ENCODE measurements at regions of chr1 and their contacts with region 1.

Region 1: DNA sequence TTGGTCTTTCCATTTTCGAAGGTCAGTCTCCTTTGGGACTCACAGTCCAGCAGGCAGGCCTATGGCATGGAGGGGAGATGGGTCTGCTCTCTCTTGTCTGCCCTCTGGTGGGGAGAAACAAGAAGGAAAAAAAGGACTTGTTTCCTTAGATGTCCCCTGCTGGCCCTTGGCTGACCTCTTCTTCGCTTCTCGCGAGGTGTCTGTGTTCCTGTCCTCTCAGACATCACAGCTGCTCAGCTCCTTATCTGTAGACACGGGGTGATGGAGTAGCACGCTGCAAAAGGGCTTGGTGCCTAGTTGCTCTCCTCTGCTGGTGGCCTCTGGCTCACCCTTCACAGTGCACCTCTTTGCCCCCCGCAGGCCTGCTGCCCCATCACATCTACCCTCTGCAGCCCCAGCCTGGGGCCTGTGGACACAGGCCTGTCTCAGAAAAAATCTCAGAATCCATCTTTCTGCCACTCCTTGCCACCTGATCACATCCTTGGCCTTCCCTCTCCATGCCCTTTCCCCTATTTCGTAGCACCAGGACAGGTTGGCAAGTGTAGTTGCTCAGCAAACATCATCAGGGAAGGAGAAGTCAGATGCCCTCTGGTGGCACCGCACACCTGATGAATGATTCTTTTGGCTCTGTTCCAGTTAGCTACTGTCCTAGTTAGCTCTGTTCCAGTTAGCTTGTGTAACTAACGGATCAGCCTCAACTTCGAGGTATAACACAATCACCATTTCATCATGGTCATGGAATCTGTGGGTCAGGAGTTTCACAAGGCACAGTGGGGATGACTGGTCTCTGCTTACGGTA is 18.7 kb upstream of the AK2 start:
- DNase-seq: peak; percentile 87
- ATAC-seq: peak; percentile 98
- H3K4me3 ChIP-seq: no peak overlapping the region
- H3K27ac ChIP-seq: no peak overlapping the region
- H3K4me1 ChIP-seq: peaks cover 3% of the 10 kb centered on the region; the same call in 1 of the 2 replicates
- H3K27me3 ChIP-seq: no peaks in the 10 kb centered on the region
- CTCF ChIP-seq: peak; percentile 80
- POLR2A ChIP-seq: no peak
- RAD21 ChIP-seq: peak; percentile 76

Region 2: DNA sequence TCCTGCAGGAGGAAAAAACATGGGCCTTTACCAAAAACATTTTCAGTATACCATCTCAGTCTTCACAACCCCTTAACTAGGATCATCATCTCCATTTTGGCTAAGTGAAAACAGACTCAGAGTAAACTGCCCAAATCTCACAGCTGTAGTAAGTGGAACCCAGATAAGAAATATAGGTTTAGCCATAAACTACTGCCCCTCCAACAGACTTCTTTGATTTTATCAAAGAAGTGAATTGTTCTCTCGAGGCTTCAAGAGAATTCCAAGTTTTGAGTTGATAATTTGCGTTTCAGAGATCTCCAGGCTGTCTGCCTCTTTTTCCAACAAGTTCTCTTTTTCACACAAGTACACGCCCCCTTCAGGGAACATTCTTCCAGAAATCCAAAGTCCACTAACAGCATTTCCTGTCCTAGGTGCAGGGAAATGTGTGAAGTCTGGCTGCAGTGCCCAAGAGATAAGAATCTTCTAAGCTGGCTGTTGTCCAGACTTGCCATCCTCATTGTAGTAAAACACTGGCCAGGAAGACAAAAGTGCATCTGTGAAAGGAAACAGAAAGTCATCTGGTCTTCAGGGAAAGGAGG is 121.6 kb before region 1 on chr1:
- CTCF ChIA-PET with region 1: interaction called, 7 read pairs
- POLR2A ChIA-PET with region 1: no interaction called
- dilution Hi-C with region 1: no loop called
- in situ Hi-C with region 1: loop called (anchors 10 kb)
- intact Hi-C with region 1: loop called (anchors 1 kb)
- DNase-seq: peak; percentile 19
- ATAC-seq: peak; percentile 56
- H3K4me3 ChIP-seq: no peak overlapping the region
- H3K27ac ChIP-seq: no peak overlapping the region
- H3K4me1 ChIP-seq: peaks cover 4% of the 10 kb centered on the region; the same call in 1 of the 2 replicates
- H3K27me3 ChIP-seq: no peaks in the 10 kb centered on the region
- CTCF ChIP-seq: no peak
- POLR2A ChIP-seq: no peak
- RAD21 ChIP-seq: no peak

Region 3: GRCh38 chr1:32939655-32940371 is 115.6 kb before region 1 on chr1:
- CTCF ChIA-PET with region 1: interaction called, 7 read pairs
- POLR2A ChIA-PET with region 1: no interaction called
- dilution Hi-C with region 1: no loop called
- in situ Hi-C with region 1: loop called (anchors 10 kb)
- intact Hi-C with region 1: no loop called
- DNase-seq: peak; percentile 96
- ATAC-seq: peak; percentile 94
- H3K4me3 ChIP-seq: no peak overlapping the region
- H3K27ac ChIP-seq: no peak overlapping the region
- H3K4me1 ChIP-seq: peaks cover 10% of the 10 kb centered on the region
- H3K27me3 ChIP-seq: no peaks in the 10 kb centered on the region
- CTCF ChIP-seq: no peak
- POLR2A ChIP-seq: no peak
- RAD21 ChIP-seq: no peak

Region 4: GRCh38 chr1:32989160-32990050 is 66.0 kb before region 1 on chr1:
- CTCF ChIA-PET with region 1: no interaction called
- POLR2A ChIA-PET with region 1: no interaction called
- dilution Hi-C with region 1: no loop called
- in situ Hi-C with region 1: no loop called
- intact Hi-C with region 1: no loop called
- DNase-seq: peak; percentile 99
- ATAC-seq: peak; percentile 63
- H3K4me3 ChIP-seq: no peak overlapping the region
- H3K27ac ChIP-seq: peak overlapping the region; percentile 79
- H3K4me1 ChIP-seq: peaks cover 25% of the 10 kb centered on the region
- H3K27me3 ChIP-seq: no peaks in the 10 kb centered on the region
- CTCF ChIP-seq: no peak
- POLR2A ChIP-seq: no peak; the same call in 1 of the 2 replicates
- RAD21 ChIP-seq: no peak

Region 5: GRCh38 chr1:33001282-33001681 is 54.1 kb before region 1 on chr1:
- CTCF ChIA-PET with region 1: no interaction called
- POLR2A ChIA-PET with region 1: no interaction called
- dilution Hi-C with region 1: no loop called
- in situ Hi-C with region 1: no loop called
- intact Hi-C with region 1: loop called (anchors 5 kb)
- DNase-seq: no peak
- ATAC-seq: no peak
- H3K4me3 ChIP-seq: no peak overlapping the region
- H3K27ac ChIP-seq: no peak overlapping the region
- H3K4me1 ChIP-seq: peaks cover 31% of the 10 kb centered on the region
- H3K27me3 ChIP-seq: no peaks in the 10 kb centered on the region
- CTCF ChIP-seq: no peak
- POLR2A ChIP-seq: no peak
- RAD21 ChIP-seq: no peak

Region 6: DNA sequence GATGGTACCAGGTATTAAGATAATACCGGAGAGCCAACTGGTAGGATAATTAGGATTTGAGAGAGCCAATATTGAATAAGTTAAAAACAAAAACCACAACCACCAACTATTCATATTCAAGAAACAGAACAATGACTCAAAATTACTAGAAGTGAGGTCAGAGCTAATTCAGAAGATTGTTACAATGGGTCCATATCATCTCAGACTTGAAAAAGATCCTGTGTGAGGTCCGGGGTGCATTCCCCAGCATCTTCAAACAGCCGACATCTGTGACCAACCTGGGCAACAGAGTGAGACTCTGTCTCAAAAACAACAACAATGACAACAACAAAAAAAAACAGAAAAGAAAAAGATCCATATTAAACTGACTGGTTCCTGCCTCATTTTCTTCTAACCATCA is 37.3 kb before region 1 on chr1:
- CTCF ChIA-PET with region 1: no interaction called
- POLR2A ChIA-PET with region 1: no interaction called
- dilution Hi-C with region 1: no loop called
- in situ Hi-C with region 1: no loop called
- intact Hi-C with region 1: no loop called
- DNase-seq: no peak
- ATAC-seq: no peak
- H3K4me3 ChIP-seq: no peak overlapping the region
- H3K27ac ChIP-seq: no peak overlapping the region
- H3K4me1 ChIP-seq: no peaks in the 10 kb centered on the region
- H3K27me3 ChIP-seq: no peaks in the 10 kb centered on the region
- CTCF ChIP-seq: no peak
- POLR2A ChIP-seq: no peak
- RAD21 ChIP-seq: no peak

Region 7: GRCh38 chr1:33815058-33815457 is 759.6 kb after region 1 on chr1:
- CTCF ChIA-PET with region 1: no interaction called
- POLR2A ChIA-PET with region 1: no interaction called
- dilution Hi-C with region 1: no loop called
- in situ Hi-C with region 1: no loop called
- intact Hi-C with region 1: no loop called
- DNase-seq: peak; percentile 46
- ATAC-seq: peak; percentile 57
- H3K4me3 ChIP-seq: no peak overlapping the region
- H3K27ac ChIP-seq: no peak overlapping the region
- H3K4me1 ChIP-seq: no peaks in the 10 kb centered on the region; the same call in 1 of the 2 replicates
- H3K27me3 ChIP-seq: no peaks in the 10 kb centered on the region
- CTCF ChIP-seq: no peak
- POLR2A ChIP-seq: no peak
- RAD21 ChIP-seq: no peak

Measured in IMR-90 (cell line).